ENCODE measurements at regions of chr10 and their contacts with region 1.

Region 1: GRCh38 chr10:89414146-89414878 is at the start of gene IFIT5:
- DNase-seq: peak; percentile 91
- H3K4me3 Mint-ChIP-seq: peak within 1 kb of the TSS; percentile 92
- H3K27ac Mint-ChIP-seq: peak within 1 kb of the TSS; percentile 95
- H3K4me1 Mint-ChIP-seq: peaks cover 46% of the 10 kb centered on the region
- H3K27me3 Mint-ChIP-seq: no peaks in the 10 kb centered on the region
- total RNA-seq, gene IFIT5: 8.5 and 9.5 TPM in 2 replicates

Region 2: DNA sequence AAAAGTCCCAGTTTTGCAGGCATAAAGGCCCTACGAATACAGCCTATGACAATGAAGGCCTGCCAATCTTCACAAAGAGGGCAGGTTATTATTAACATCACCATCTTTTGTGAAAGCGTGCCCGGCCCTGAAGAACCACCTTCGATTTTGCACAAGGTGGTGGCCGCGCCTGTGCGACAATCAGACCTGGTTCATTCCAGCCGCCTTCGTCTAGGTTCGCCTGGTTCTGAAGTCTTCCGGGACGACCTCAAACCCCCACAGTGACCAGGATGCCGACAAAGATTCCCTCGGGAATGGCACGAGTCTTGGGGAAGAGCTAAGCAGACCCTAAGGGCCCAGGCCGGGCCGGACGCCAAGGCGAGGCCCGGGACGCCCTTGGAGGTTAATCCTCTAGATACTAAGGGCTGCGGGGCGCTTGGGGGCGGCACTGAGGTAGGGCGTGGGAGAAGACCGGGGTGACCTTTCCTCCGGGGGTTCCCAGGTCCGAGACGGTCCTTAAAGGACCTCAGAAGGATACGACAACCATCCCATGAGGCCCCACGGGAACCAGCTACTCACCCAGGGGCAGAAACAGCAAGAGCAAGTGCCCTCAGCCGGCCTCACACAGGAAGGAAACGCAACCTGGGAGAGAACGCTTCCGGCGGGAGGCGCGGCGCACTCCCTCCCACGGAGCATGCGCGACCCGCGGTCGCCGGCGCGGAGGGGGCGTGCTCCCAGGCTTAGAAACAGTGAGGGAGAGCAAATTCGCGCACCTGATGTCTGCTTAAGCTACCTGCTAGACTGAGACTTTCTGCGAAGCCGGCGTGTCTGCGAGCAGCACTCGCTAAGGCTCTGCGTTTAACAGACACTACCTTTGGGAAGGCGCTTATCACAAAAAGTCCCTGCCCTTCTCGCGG is 1596.5 kb before region 1 on chr10 and contains the start of gene ATAD1:
- intact Hi-C with region 1: loop called (anchors 2 kb)
- DNase-seq: peak; percentile 97
- H3K4me3 Mint-ChIP-seq: peak within 1 kb of the TSS; percentile 90
- H3K27ac Mint-ChIP-seq: peak within 1 kb of the TSS; percentile 98
- H3K4me1 Mint-ChIP-seq: peaks cover 27% of the 10 kb centered on the region
- H3K27me3 Mint-ChIP-seq: peaks cover 2% of the 10 kb centered on the region
- total RNA-seq, gene ATAD1: 54.1 and 55.5 TPM in 2 replicates

Region 3: GRCh38 chr10:89001024-89001728 is 413.1 kb before region 1 on chr10:
- intact Hi-C with region 1: loop called (anchors 10 kb)
- DNase-seq: peak; percentile 79
- H3K4me3 Mint-ChIP-seq: peak overlapping the region; percentile 82
- H3K27ac Mint-ChIP-seq: peak overlapping the region; percentile 91
- H3K4me1 Mint-ChIP-seq: peaks cover 60% of the 10 kb centered on the region
- H3K27me3 Mint-ChIP-seq: no peaks in the 10 kb centered on the region

Region 4: GRCh38 chr10:89399956-89400355 is 14.4 kb before region 1 on chr10:
- intact Hi-C with region 1: loop called (anchors 1 kb)
- DNase-seq: no peak
- H3K4me3 Mint-ChIP-seq: no peak overlapping the region
- H3K27ac Mint-ChIP-seq: no peak overlapping the region
- H3K4me1 Mint-ChIP-seq: peaks cover 26% of the 10 kb centered on the region
- H3K27me3 Mint-ChIP-seq: no peaks in the 10 kb centered on the region

Region 5: DNA sequence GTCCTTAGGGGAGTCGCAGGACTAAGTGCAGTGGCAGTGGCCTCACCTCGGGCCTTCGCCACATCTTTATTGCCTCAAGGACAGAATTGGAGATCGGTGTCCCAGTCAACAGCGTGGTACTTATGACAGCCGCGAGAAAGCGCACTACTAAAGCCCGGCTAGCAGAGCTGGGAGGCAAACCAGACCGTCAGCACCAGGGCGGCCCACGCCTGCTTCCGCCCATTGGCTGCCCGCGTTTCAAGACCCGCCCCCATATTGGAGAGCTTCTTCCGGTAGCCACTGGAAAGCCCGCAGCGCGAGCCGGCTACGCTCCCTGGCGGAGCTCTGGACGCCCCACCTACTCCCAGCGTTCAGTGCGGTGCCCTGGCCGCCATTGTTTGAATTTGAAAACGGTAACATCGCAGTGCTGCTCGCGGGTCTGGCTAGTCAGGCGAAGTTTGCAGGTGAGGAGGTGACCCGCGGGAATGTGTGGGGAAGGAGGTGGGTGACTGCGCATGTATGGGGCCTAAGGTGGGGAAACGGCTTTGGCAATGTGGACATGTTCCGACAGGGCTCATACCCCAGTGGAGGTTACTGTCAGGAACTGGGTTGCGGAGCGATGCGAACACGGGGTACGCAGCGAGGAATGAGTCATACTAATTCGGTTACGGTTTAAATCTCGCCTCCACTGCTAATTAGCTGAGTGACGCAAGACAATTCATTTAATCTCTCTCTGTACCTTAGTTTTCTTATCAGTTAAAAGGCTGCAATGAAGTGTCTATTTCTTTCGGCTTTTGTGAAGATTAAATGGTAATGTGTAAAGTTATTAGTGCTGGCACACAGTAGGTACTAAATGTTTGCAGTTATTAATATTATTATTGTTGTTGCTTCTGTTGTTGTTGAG is 287.2 kb after region 1 on chr10 and contains the start of gene KIF20B:
- intact Hi-C with region 1: loop called (anchors 1 kb)
- DNase-seq: peak; percentile 99
- H3K4me3 Mint-ChIP-seq: peak within 1 kb of the TSS; percentile 95
- H3K27ac Mint-ChIP-seq: peak within 1 kb of the TSS; percentile 98
- H3K4me1 Mint-ChIP-seq: peaks cover 42% of the 10 kb centered on the region
- H3K27me3 Mint-ChIP-seq: no peaks in the 10 kb centered on the region
- total RNA-seq, gene KIF20B: 55.0 and 55.6 TPM in 2 replicates

Measured in activated CD4-positive, alpha-beta T cell treated with anti-CD3 and anti-CD28 coated beads, Interleukin-2, amount 10 ng/mL, durations not matched to agents 24 days and 14 days (primary cell).